ENCODE measurements at regions of chr22 and their contacts with region 1.

Region 1: GRCh38 chr22:21938071-21938822 is 14.4 kb downstream of the PPM1F start:
- DNase-seq: peak; percentile 95
- H3K4me3 ChIP-seq: no peak overlapping the region
- H3K27ac ChIP-seq: peak overlapping the region; percentile 86
- H3K4me1 ChIP-seq: peaks cover 60% of the 10 kb centered on the region
- H3K27me3 ChIP-seq: no peaks in the 10 kb centered on the region
- CTCF ChIP-seq: peak; percentile 99
- POLR2A ChIP-seq: no peak

Region 2: GRCh38 chr22:21712894-21713712 is 225.1 kb before region 1 on chr22:
- CTCF ChIA-PET with region 1: interaction called, 27 read pairs
- POLR2A ChIA-PET with region 1: interaction called, 6 read pairs
- dilution Hi-C with region 1: loop called (anchors 25 kb)
- intact Hi-C with region 1: loop called (anchors 1 kb)
- DNase-seq: peak; percentile 85
- H3K4me3 ChIP-seq: peak overlapping the region in 1 of 3 experiments; percentile 4
- H3K27ac ChIP-seq: no peak overlapping the region
- H3K4me1 ChIP-seq: peaks cover 3% of the 10 kb centered on the region
- H3K27me3 ChIP-seq: no peaks in the 10 kb centered on the region
- CTCF ChIP-seq: peak; percentile 66 to 77
- POLR2A ChIP-seq: no peak

Region 3: DNA sequence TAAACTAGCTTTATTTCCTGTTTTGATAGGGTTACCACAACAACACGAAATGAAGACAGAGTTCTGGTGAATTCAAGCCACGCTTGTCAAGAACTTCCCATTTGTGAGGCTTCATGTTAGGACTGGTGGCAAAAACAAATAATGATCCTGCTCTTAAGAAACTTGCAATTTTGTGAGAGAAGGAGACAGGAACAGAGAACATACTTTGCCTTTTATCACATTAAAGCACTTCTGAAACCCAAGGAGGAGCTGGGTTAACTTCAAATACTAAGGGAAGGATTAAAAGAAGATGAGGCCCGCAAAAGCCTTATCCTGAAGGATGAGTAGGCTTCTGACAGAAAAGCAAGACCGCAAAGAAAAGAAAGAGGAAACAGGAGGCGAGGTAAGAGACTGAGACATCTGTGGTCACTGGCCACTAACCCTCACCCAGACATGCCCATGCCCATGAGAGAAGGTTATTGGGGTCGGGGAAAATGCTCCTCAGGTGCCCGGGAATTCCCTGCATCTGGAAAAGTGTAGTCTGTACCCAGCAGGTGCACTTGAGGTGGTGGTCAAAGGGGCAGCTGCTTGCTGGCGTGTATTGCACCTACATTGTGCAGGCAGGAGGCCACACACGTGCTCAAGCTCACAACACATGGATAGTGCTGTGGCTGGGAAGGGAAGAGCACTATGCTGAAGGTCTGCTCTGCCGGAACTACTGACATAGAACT is 121.3 kb before region 1 on chr22:
- CTCF ChIA-PET with region 1: no interaction called
- POLR2A ChIA-PET with region 1: no interaction called
- dilution Hi-C with region 1: loop called (anchors 25 kb)
- intact Hi-C with region 1: loop called (anchors 1 kb)
- DNase-seq: peak; percentile 95
- H3K4me3 ChIP-seq: peak overlapping the region in 1 of 3 experiments; percentile 29
- H3K27ac ChIP-seq: peak overlapping the region; percentile 96
- H3K4me1 ChIP-seq: peaks cover 32% of the 10 kb centered on the region
- H3K27me3 ChIP-seq: no peaks in the 10 kb centered on the region
- CTCF ChIP-seq: no peak
- POLR2A ChIP-seq: no peak

Region 4: DNA sequence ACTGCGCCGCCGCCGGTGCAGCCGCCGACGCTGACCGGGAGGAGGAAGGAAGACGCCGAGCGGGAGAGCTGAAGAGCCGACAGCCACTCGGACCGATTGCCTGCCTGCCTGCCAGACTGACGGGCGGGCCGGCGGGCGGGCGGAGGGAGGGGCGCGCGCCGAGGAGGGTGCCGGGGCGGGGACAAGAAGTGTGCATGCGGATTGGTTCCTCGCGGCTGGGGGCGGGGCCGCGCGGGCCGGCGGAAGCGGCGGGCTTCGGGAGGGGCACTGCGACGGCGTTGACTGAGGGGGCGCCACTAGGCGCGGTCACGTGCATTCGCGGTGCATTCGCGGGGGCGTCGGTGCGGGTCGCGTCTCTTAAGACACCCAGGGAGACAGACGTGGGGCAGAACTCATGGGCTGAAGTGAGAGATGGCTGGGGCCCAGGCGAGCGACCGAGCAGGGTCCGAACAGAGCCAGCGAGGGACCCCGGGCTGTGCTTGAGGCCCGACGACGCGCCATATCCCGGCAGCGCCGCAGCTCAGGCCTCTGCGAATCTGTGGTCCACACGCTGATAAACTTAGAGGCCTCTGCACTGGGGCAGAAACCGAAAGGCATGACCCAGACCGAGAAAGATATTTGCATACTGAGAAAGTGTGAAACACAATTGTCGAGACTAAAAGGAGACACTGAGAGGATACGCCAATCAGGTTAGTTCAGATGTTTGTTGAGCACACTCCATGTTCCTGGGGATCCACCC is 70.5 kb before region 1 on chr22 and contains the start of gene MAPK1:
- CTCF ChIA-PET with region 1: no interaction called
- POLR2A ChIA-PET with region 1: no interaction called
- dilution Hi-C with region 1: no loop called
- intact Hi-C with region 1: loop called (anchors 1 kb)
- DNase-seq: peak; percentile 92
- H3K4me3 ChIP-seq: peak within 1 kb of the TSS; percentile 58 to 86 (median 85)
- H3K27ac ChIP-seq: peak within 1 kb of the TSS; percentile 77
- H3K4me1 ChIP-seq: peaks cover 18% of the 10 kb centered on the region
- H3K27me3 ChIP-seq: no peaks in the 10 kb centered on the region
- CTCF ChIP-seq: peak in 1 of 2 donors; percentile 50
- POLR2A ChIP-seq: peak; percentile 93
- total RNA-seq, gene MAPK1: 155 and 163 TPM in 2 replicates

Region 5: GRCh38 chr22:21972293-21972779 is 34.1 kb after region 1 on chr22:
- CTCF ChIA-PET with region 1: interaction called, 26 read pairs
- POLR2A ChIA-PET with region 1: no interaction called
- dilution Hi-C with region 1: no loop called
- intact Hi-C with region 1: no loop called
- DNase-seq: peak; percentile 40
- H3K4me3 ChIP-seq: no peak overlapping the region
- H3K27ac ChIP-seq: no peak overlapping the region
- H3K4me1 ChIP-seq: no peaks in the 10 kb centered on the region
- H3K27me3 ChIP-seq: no peaks in the 10 kb centered on the region
- CTCF ChIP-seq: peak; percentile 87 to 93
- POLR2A ChIP-seq: no peak